ENCODE measurements at regions of chr15 and their contacts with region 1.

Region 1: DNA sequence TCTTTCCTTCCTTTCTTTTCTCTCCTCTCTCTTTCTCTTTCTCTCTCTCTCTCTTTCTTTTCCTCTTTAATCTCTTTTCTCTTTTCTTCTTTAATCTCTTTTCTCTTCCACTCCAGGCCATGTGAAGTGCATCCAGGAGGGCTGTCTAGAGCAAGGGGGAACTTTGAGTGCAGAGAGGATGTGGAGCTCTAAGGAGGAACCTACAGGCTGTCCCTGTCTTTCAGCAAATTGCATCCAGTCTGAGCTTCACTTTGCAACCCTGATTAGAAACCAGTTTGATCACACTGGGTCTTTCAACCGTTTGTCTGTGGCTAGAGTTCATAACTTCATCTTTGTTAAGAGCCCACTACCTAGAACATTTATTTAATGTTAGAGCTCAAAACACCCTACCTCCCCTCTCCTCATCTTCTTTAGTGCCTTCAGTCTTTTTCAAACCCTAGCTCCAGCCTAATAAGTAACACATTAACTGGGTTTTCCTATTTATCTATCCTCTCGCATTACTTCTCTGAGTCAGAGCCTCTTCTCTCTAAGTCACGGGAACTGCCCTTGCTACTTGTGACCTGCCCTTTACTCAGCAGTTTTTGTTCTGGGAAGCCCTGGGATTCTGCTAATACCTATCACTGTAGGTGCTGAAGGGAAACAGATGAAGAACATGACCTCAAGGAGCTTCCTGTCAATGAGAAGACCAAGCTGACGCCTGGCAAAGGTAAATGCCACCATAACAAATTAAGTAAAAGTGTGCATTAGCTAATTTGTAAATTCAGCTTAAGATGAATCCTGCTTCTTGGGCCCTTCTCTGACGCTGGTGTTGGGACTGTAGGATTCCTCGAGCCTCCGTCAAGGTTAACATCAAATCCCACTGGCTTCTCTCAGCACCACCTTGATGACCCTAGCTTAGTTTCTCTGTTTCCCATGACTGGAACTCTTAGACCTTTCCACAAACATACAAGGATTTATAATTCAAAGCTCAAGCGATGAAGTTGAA is at the start of gene GCNT3:
- DNase-seq: peak; percentile 90
- ATAC-seq: peak; percentile 90
- H3K4me3 ChIP-seq: peak within 1 kb of the TSS; percentile 56 to 66 (median 63)
- H3K27ac ChIP-seq: peak within 1 kb of the TSS; percentile 64
- H3K4me1 ChIP-seq: peaks cover 61% of the 10 kb centered on the region
- H3K27me3 ChIP-seq: no peaks in the 10 kb centered on the region
- CTCF ChIP-seq: no peak
- EP300 ChIP-seq: peak in 1 of 2 experiments; percentile 68; a peak in 2 of 4 replicates
- POLR2A ChIP-seq: peak; percentile 28 to 40; a peak in 2 of 4 replicates
- RAD21 ChIP-seq: no peak
- total RNA-seq, gene GCNT3: 7.7 and 9.8 TPM in 2 replicates

Region 2: GRCh38 chr15:59237119-59237855 is 374.3 kb before region 1 on chr15:
- CTCF ChIA-PET with region 1: no interaction called
- POLR2A ChIA-PET with region 1: no interaction called
- in situ Hi-C with region 1: no loop called
- intact Hi-C with region 1: no loop called
- DNase-seq: no peak
- ATAC-seq: no peak
- H3K4me3 ChIP-seq: no peak overlapping the region
- H3K27ac ChIP-seq: no peak overlapping the region
- H3K4me1 ChIP-seq: peaks cover 17% of the 10 kb centered on the region
- H3K27me3 ChIP-seq: no peaks in the 10 kb centered on the region
- CTCF ChIP-seq: no peak
- EP300 ChIP-seq: no peak
- POLR2A ChIP-seq: no peak
- RAD21 ChIP-seq: no peak

Region 3: GRCh38 chr15:59543721-59544547 is 67.6 kb before region 1 on chr15:
- CTCF ChIA-PET with region 1: no interaction called
- POLR2A ChIA-PET with region 1: no interaction called
- in situ Hi-C with region 1: loop called (anchors 5 kb)
- intact Hi-C with region 1: no loop called
- DNase-seq: no peak
- ATAC-seq: no peak
- H3K4me3 ChIP-seq: no peak overlapping the region
- H3K27ac ChIP-seq: no peak overlapping the region
- H3K4me1 ChIP-seq: peaks cover 46% of the 10 kb centered on the region
- H3K27me3 ChIP-seq: peaks cover 4 to 28% of the 10 kb centered on the region in 2 experiments; a peak in 4 of 5 replicates
- CTCF ChIP-seq: no peak
- EP300 ChIP-seq: no peak
- POLR2A ChIP-seq: no peak
- RAD21 ChIP-seq: no peak

Region 4: GRCh38 chr15:59553879-59554735 is 57.5 kb before region 1 on chr15:
- CTCF ChIA-PET with region 1: no interaction called
- POLR2A ChIA-PET with region 1: interaction called, 12 read pairs
- in situ Hi-C with region 1: no loop called
- intact Hi-C with region 1: loop called (anchors 5 kb)
- DNase-seq: peak; percentile 100
- ATAC-seq: peak; percentile 97
- H3K4me3 ChIP-seq: peak overlapping the region in 1 of 3 experiments; percentile 9; a peak in 1 of 6 replicates
- H3K27ac ChIP-seq: peak overlapping the region; percentile 55
- H3K4me1 ChIP-seq: peaks cover 82% of the 10 kb centered on the region
- H3K27me3 ChIP-seq: peaks cover 1 to 5% of the 10 kb centered on the region in 2 experiments; a peak in 1 of 5 replicates
- CTCF ChIP-seq: no peak
- EP300 ChIP-seq: peak; percentile 84 to 97; a peak in 3 of 4 replicates
- POLR2A ChIP-seq: no peak
- RAD21 ChIP-seq: no peak

Region 5: DNA sequence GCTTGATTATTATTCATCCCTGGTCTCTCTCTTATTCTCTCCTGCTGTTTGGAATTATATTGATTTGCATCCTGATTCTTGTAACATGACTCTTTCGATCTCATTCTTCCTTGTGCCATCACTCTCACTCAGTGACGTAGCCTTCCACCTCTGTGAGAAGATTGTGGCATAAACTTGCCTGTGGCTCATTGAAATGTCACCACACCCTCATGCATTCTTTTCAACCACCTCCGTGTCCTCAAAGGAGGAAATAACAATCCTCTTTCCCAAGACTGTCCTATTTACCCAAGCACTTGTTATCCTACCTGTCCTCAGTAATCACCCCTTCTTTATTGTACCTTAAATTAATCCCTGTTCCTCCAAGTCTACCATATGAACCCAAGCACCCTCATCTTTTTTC is 41.2 kb before region 1 on chr15:
- CTCF ChIA-PET with region 1: no interaction called
- POLR2A ChIA-PET with region 1: no interaction called
- in situ Hi-C with region 1: loop called (anchors 5 kb)
- intact Hi-C with region 1: no loop called
- DNase-seq: no peak
- ATAC-seq: no peak
- H3K4me3 ChIP-seq: no peak overlapping the region
- H3K27ac ChIP-seq: no peak overlapping the region
- H3K4me1 ChIP-seq: peaks cover 34% of the 10 kb centered on the region
- H3K27me3 ChIP-seq: peaks cover 0 to 9% of the 10 kb centered on the region in 2 experiments; a peak in 1 of 5 replicates
- CTCF ChIP-seq: no peak
- EP300 ChIP-seq: no peak
- POLR2A ChIP-seq: no peak
- RAD21 ChIP-seq: no peak

Region 6: GRCh38 chr15:59594493-59594942 is 17.1 kb before region 1 on chr15:
- CTCF ChIA-PET with region 1: no interaction called
- POLR2A ChIA-PET with region 1: interaction called, 43 read pairs
- in situ Hi-C with region 1: no loop called
- intact Hi-C with region 1: loop called (anchors 1 kb)
- DNase-seq: peak; percentile 84
- ATAC-seq: peak; percentile 85
- H3K4me3 ChIP-seq: 0 out of 6 replicates have a peak overlapping the region, but pooled peaks of 1 of the 3 experiments have one; percentile 49
- H3K27ac ChIP-seq: peak overlapping the region; percentile 56
- H3K4me1 ChIP-seq: peaks cover 39% of the 10 kb centered on the region
- H3K27me3 ChIP-seq: no peaks in the 10 kb centered on the region
- CTCF ChIP-seq: no peak
- EP300 ChIP-seq: peak in 1 of 2 experiments; percentile 41; a peak in 1 of 4 replicates
- POLR2A ChIP-seq: no peak; a peak in 1 of 4 replicates
- RAD21 ChIP-seq: no peak

Region 7: GRCh38 chr15:59642351-59642750 is 30.8 kb after region 1 on chr15:
- CTCF ChIA-PET with region 1: no interaction called
- POLR2A ChIA-PET with region 1: no interaction called
- in situ Hi-C with region 1: no loop called
- intact Hi-C with region 1: no loop called
- DNase-seq: no peak
- ATAC-seq: no peak
- H3K4me3 ChIP-seq: no peak overlapping the region
- H3K27ac ChIP-seq: no peak overlapping the region
- H3K4me1 ChIP-seq: no peaks in the 10 kb centered on the region
- H3K27me3 ChIP-seq: no peaks in the 10 kb centered on the region
- CTCF ChIP-seq: no peak
- EP300 ChIP-seq: no peak
- POLR2A ChIP-seq: no peak
- RAD21 ChIP-seq: no peak

Region 8: GRCh38 chr15:59678620-59679019 is 67.1 kb after region 1 on chr15:
- CTCF ChIA-PET with region 1: no interaction called
- POLR2A ChIA-PET with region 1: no interaction called
- in situ Hi-C with region 1: no loop called
- intact Hi-C with region 1: no loop called
- DNase-seq: no peak
- ATAC-seq: no peak
- H3K4me3 ChIP-seq: no peak overlapping the region
- H3K27ac ChIP-seq: no peak overlapping the region
- H3K4me1 ChIP-seq: no peaks in the 10 kb centered on the region
- H3K27me3 ChIP-seq: no peaks in the 10 kb centered on the region
- CTCF ChIP-seq: no peak
- EP300 ChIP-seq: no peak
- POLR2A ChIP-seq: no peak
- RAD21 ChIP-seq: no peak